WTC11 (cell line): ENCODE measurements at regions of chr20 and their contacts with region 1.

Region 1: DNA sequence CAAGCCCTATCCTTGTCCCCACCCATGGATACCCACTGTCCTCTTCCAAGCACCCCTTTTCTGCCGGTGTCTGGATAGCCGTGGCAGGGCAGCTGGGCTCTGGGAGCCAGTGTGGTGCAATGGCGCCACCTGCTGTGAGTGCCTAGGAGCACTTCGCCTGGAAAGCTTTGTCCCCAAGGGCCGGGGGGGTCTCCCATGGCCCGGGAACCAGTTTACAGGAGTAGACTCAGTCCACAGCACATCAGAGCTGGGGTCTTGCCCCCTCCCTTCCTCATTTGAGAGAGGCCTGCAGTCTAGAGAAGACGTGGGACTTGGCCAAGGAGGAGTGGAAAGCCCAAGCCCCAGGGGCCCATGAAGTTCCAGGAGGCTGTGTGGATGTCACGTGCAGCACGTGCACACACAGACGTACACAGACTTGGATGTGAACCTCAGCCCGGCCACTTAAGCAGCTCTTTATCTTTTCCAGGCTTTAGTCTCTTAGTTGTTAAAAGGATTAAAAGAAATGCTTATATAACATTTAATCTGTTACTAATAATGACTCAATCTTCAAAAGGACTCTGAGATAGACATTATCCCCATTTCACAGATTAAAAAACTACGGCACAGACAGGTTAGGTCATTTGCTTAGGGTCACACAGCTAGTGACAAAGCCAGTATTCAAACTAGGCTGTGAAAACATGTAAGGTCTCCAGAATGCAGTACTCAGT is 40.9 kb upstream of the CDH22 start:
- DNase-seq: peak; percentile 81
- ATAC-seq: peak; percentile 38
- H3K4me3 Mint-ChIP-seq: peak overlapping the region; percentile 38; the same call in 1 of the 2 replicates
- H3K27ac Mint-ChIP-seq: peak overlapping the region; percentile 41
- H3K4me1 Mint-ChIP-seq: peaks cover 36% of the 10 kb centered on the region
- H3K27me3 Mint-ChIP-seq: peaks cover 7% of the 10 kb centered on the region
- CTCF ChIP-seq: peak; percentile 54

Region 2: GRCh38 chr20:46022411-46023147 is 326.6 kb before region 1 on chr20:
- CTCF ChIA-PET with region 1: interaction called, 16 read pairs
- POLR2A ChIA-PET with region 1: no interaction called
- DNase-seq: peak; percentile 87
- ATAC-seq: peak; percentile 7; the same call in 1 of the 2 replicates
- H3K4me3 Mint-ChIP-seq: peak overlapping the region; percentile 76
- H3K27ac Mint-ChIP-seq: peak overlapping the region; percentile 28; the same call in 1 of the 2 replicates
- H3K4me1 Mint-ChIP-seq: peaks cover 7% of the 10 kb centered on the region
- H3K27me3 Mint-ChIP-seq: peaks cover 50% of the 10 kb centered on the region
- CTCF ChIP-seq: peak; percentile 79

Region 3: GRCh38 chr20:46174469-46175128 is 174.6 kb before region 1 on chr20:
- CTCF ChIA-PET with region 1: interaction called, 23 read pairs
- POLR2A ChIA-PET with region 1: no interaction called
- DNase-seq: peak; percentile 93
- ATAC-seq: peak; percentile 97
- H3K4me3 Mint-ChIP-seq: peak overlapping the region; percentile 62
- H3K27ac Mint-ChIP-seq: no peak overlapping the region
- H3K4me1 Mint-ChIP-seq: no peaks in the 10 kb centered on the region
- H3K27me3 Mint-ChIP-seq: peaks cover 54% of the 10 kb centered on the region
- CTCF ChIP-seq: peak; percentile 55

Region 4: GRCh38 chr20:46289432-46289831 is 59.8 kb before region 1 on chr20:
- CTCF ChIA-PET with region 1: interaction called, 16 read pairs
- POLR2A ChIA-PET with region 1: no interaction called
- DNase-seq: no peak
- ATAC-seq: no peak
- H3K4me3 Mint-ChIP-seq: no peak overlapping the region
- H3K27ac Mint-ChIP-seq: no peak overlapping the region
- H3K4me1 Mint-ChIP-seq: peaks cover 12% of the 10 kb centered on the region; the same call in 1 of the 2 replicates
- H3K27me3 Mint-ChIP-seq: no peaks in the 10 kb centered on the region; the same call in 1 of the 2 replicates
- CTCF ChIP-seq: no peak

Region 5: GRCh38 chr20:46330072-46330763 is 19.0 kb before region 1 on chr20:
- CTCF ChIA-PET with region 1: interaction called, 43 read pairs
- POLR2A ChIA-PET with region 1: no interaction called
- DNase-seq: no peak
- ATAC-seq: no peak
- H3K4me3 Mint-ChIP-seq: no peak overlapping the region
- H3K27ac Mint-ChIP-seq: no peak overlapping the region
- H3K4me1 Mint-ChIP-seq: peaks cover 36% of the 10 kb centered on the region
- H3K27me3 Mint-ChIP-seq: peaks cover 3% of the 10 kb centered on the region
- CTCF ChIP-seq: no peak

Region 6: DNA sequence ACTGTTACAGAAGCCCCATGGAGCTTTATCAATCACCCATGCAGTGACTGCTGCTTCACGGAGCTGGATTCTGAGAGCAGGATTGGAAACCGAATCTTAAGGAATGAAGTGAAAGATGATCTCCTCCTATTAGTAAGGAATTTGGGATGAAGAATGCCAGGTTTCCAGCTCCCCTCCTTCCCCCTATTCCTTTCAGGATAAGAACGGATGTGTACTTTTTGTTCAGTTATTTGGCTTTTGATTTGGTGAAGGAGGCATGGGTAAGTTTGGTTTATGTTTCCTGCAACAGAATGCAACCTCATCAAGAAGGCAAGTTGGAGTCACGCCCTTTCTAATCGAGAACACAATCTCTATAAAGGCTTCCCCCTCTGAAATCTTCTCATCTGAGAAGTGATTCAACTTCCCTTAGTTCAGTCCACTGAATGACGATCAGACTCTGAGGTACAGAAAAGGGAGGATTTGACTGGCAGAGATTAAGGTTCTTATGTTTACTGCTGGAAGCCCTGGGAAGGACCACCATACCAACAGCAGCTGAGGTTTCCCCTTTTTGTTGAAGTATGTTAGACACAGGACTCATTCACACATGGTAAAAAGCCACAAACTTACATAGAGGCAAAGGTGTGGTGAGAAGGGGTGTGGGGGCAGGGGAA is 51.8 kb after region 1 on chr20:
- CTCF ChIA-PET with region 1: interaction called, 17 read pairs
- POLR2A ChIA-PET with region 1: interaction called, 3 read pairs
- DNase-seq: no peak
- ATAC-seq: peak; percentile 77
- H3K4me3 Mint-ChIP-seq: peak overlapping the region; percentile 26; the same call in 1 of the 2 replicates
- H3K27ac Mint-ChIP-seq: peak overlapping the region; percentile 90
- H3K4me1 Mint-ChIP-seq: peaks cover 28% of the 10 kb centered on the region
- H3K27me3 Mint-ChIP-seq: no peaks in the 10 kb centered on the region
- CTCF ChIP-seq: no peak

Region 7: GRCh38 chr20:46416421-46416820 is 67.2 kb after region 1 on chr20:
- CTCF ChIA-PET with region 1: no interaction called
- POLR2A ChIA-PET with region 1: no interaction called
- DNase-seq: no peak
- ATAC-seq: no peak
- H3K4me3 Mint-ChIP-seq: no peak overlapping the region
- H3K27ac Mint-ChIP-seq: no peak overlapping the region
- H3K4me1 Mint-ChIP-seq: no peaks in the 10 kb centered on the region
- H3K27me3 Mint-ChIP-seq: no peaks in the 10 kb centered on the region
- CTCF ChIP-seq: no peak

Region 8: DNA sequence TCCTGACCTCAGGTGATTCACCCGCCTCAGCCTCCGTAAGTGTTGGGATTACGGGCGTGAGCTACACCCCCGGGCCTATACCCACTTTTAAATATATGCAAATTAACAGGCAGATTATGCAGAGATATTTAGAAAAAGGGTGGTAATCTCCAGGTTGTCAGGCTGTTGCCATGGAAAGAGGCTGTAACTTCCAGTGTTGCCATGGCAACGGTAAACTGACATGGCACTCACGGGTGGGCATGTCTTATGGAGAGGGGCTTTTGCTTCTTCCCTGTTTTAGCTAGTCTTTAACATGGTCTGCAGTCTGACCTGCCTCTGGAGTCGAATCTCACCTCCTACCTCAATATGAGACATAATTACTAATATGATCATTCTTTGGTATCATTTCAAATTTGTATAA is 119.3 kb after region 1 on chr20:
- CTCF ChIA-PET with region 1: no interaction called
- POLR2A ChIA-PET with region 1: no interaction called
- DNase-seq: no peak
- ATAC-seq: no peak
- H3K4me3 Mint-ChIP-seq: no peak overlapping the region
- H3K27ac Mint-ChIP-seq: no peak overlapping the region
- H3K4me1 Mint-ChIP-seq: peaks cover 5% of the 10 kb centered on the region
- H3K27me3 Mint-ChIP-seq: no peaks in the 10 kb centered on the region
- CTCF ChIP-seq: no peak